Ovary (tissue), 10 donors: ENCODE measurements at regions of chr6 and their contacts with region 1.

Region 1: GRCh38 chr6:154733012-154733625 is at the start of gene SCAF8:
- DNase-seq: peak; percentile 79 to 92 (median 86)
- H3K4me3 ChIP-seq: peak within 1 kb of the TSS; percentile 94
- H3K27ac ChIP-seq: peak within 1 kb of the TSS; percentile 99
- H3K4me1 ChIP-seq: peaks cover 16% of the 10 kb centered on the region
- H3K27me3 ChIP-seq: no peaks in the 10 kb centered on the region
- CTCF ChIP-seq: peak; percentile 92 to 95 (median 93)
- EP300 ChIP-seq: no peak
- POLR2A ChIP-seq: peak; percentile 80
- total RNA-seq, gene SCAF8: 38.9 to 66.1 (median 56.9) TPM

Region 2: GRCh38 chr6:154510143-154510905 is 222.8 kb before region 1 on chr6 and contains the start of gene CNKSR3:
- intact Hi-C with region 1: loop called in 1 of 4 experiments (anchors 10 kb)
- DNase-seq: peak; percentile 93 to 94 (median 93)
- H3K4me3 ChIP-seq: peak within 1 kb of the TSS; percentile 89
- H3K27ac ChIP-seq: peak within 1 kb of the TSS; percentile 76 to 90
- H3K4me1 ChIP-seq: peaks cover 13% of the 10 kb centered on the region
- H3K27me3 ChIP-seq: no peaks in the 10 kb centered on the region
- CTCF ChIP-seq: peak in 1 of 3 donors; percentile 21
- EP300 ChIP-seq: no peak
- POLR2A ChIP-seq: peak; percentile 55
- total RNA-seq, gene CNKSR3: 8.6 to 15.4 (median 12.8) TPM

Region 3: GRCh38 chr6:154537511-154538325 is 195.4 kb before region 1 on chr6:
- intact Hi-C with region 1: no loop called
- DNase-seq: no peak
- H3K4me3 ChIP-seq: no peak overlapping the region
- H3K27ac ChIP-seq: no peak overlapping the region
- H3K4me1 ChIP-seq: no peaks in the 10 kb centered on the region
- H3K27me3 ChIP-seq: no peaks in the 10 kb centered on the region
- CTCF ChIP-seq: no peak
- EP300 ChIP-seq: no peak
- POLR2A ChIP-seq: no peak

Region 4: DNA sequence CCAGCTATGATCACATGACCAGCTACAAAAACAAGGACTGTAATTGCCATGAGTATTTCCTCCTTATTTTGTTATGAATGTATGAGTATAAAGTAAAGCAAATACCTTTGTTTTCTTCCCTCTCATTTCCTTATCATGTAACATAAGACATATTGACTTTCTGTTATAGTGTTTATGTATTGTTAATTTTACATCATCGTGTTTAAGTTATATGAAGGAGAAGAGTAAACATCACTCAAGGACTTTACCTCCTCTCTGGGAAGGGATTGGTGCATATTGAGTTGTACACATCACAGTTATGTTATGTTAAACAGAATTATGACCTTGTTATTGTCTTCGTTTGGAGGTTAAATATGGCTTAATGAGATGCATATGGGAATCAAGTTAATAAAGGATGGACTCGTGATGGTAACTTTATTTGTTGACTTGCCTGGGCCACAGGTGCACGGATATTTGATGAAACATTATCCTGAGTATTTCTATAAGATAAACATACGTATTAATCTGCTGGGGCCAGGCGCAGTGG is 165.4 kb before region 1 on chr6:
- intact Hi-C with region 1: no loop called
- DNase-seq: no peak
- H3K4me3 ChIP-seq: no peak overlapping the region
- H3K27ac ChIP-seq: no peak overlapping the region
- H3K4me1 ChIP-seq: peaks cover 1% of the 10 kb centered on the region
- H3K27me3 ChIP-seq: no peaks in the 10 kb centered on the region
- CTCF ChIP-seq: no peak
- EP300 ChIP-seq: no peak
- POLR2A ChIP-seq: no peak

Region 5: GRCh38 chr6:154791556-154792317 is 58.6 kb after region 1 on chr6:
- intact Hi-C with region 1: loop called in 1 of 4 experiments (anchors 10 kb)
- DNase-seq: no peak
- H3K4me3 ChIP-seq: no peak overlapping the region
- H3K27ac ChIP-seq: no peak overlapping the region
- H3K4me1 ChIP-seq: no peaks in the 10 kb centered on the region
- H3K27me3 ChIP-seq: no peaks in the 10 kb centered on the region
- CTCF ChIP-seq: no peak
- EP300 ChIP-seq: no peak
- POLR2A ChIP-seq: no peak

Region 6: GRCh38 chr6:154805288-154805911 is 72.3 kb after region 1 on chr6:
- intact Hi-C with region 1: loop called in 2 of 4 experiments (anchors 10 kb)
- DNase-seq: no peak
- H3K4me3 ChIP-seq: no peak overlapping the region
- H3K27ac ChIP-seq: no peak overlapping the region
- H3K4me1 ChIP-seq: no peaks in the 10 kb centered on the region
- H3K27me3 ChIP-seq: no peaks in the 10 kb centered on the region
- CTCF ChIP-seq: peak; percentile 14 to 59 (median 25)
- EP300 ChIP-seq: no peak
- POLR2A ChIP-seq: no peak

Region 7: GRCh38 chr6:154901876-154902552 is 168.9 kb after region 1 on chr6:
- intact Hi-C with region 1: no loop called
- DNase-seq: no peak
- H3K4me3 ChIP-seq: no peak overlapping the region
- H3K27ac ChIP-seq: no peak overlapping the region
- H3K4me1 ChIP-seq: no peaks in the 10 kb centered on the region
- H3K27me3 ChIP-seq: no peaks in the 10 kb centered on the region
- CTCF ChIP-seq: no peak
- EP300 ChIP-seq: no peak
- POLR2A ChIP-seq: no peak